ENCODE measurements at regions of chr13 and their contacts with region 1.

Region 1: GRCh38 chr13:42001580-42001979 is 40.7 kb upstream of the VWA8 start:
- DNase-seq: peak; percentile 75
- H3K4me3 ChIP-seq: peak overlapping the region in 1 of 3 experiments; percentile 7
- H3K27ac ChIP-seq: peak overlapping the region; percentile 48
- H3K4me1 ChIP-seq: peaks cover 16% of the 10 kb centered on the region
- H3K27me3 ChIP-seq: no peaks in the 10 kb centered on the region
- CTCF ChIP-seq: no peak

Region 2: DNA sequence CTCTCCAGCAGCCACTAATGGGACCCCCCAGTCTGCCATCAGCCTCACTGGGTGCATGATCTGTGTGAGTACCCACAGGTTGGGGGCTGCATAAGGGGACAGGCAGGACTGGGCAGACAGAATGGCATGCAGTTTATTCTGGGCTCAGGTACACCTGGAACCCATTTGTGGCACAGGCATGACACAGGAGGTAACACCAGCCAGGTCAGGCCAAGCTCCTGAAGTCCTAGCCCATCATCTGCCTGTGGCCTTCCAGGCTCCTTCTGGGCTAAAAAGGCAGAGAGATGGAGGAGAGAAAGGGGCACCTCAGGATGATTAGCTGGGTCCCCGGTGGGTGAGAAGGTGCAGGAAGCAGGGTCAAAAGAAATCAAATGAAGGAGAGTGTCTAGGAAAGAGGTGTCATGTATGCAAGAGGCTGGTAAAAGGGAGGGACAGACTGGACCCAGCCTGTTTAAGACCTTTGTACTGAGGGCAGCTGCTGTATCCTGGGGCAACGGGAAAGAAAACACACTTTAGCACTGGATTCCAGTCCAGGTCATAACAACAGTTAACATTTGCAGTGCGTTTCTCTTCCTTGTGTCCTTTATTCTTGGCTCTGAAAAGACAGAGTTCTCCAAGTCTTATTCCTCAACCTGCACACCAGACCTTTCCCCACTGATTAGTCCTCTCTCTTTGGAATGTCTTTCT is 26.7 kb after region 1 on chr13:
- CTCF ChIA-PET with region 1: no interaction called
- dilution Hi-C with region 1: no loop called
- in situ Hi-C with region 1: no loop called
- intact Hi-C with region 1: loop called (anchors 2 kb)
- DNase-seq: no peak
- H3K4me3 ChIP-seq: no peak overlapping the region
- H3K27ac ChIP-seq: no peak overlapping the region
- H3K4me1 ChIP-seq: peaks cover 37% of the 10 kb centered on the region
- H3K27me3 ChIP-seq: no peaks in the 10 kb centered on the region
- CTCF ChIP-seq: no peak

Region 3: GRCh38 chr13:42078128-42078808 is 76.7 kb after region 1 on chr13:
- CTCF ChIA-PET with region 1: no interaction called
- dilution Hi-C with region 1: no loop called
- in situ Hi-C with region 1: no loop called
- intact Hi-C with region 1: no loop called
- DNase-seq: no peak
- H3K4me3 ChIP-seq: no peak overlapping the region
- H3K27ac ChIP-seq: no peak overlapping the region
- H3K4me1 ChIP-seq: no peaks in the 10 kb centered on the region
- H3K27me3 ChIP-seq: no peaks in the 10 kb centered on the region
- CTCF ChIP-seq: no peak